ENCODE measurements at regions of chr3 and their contacts with region 1.

Region 1: DNA sequence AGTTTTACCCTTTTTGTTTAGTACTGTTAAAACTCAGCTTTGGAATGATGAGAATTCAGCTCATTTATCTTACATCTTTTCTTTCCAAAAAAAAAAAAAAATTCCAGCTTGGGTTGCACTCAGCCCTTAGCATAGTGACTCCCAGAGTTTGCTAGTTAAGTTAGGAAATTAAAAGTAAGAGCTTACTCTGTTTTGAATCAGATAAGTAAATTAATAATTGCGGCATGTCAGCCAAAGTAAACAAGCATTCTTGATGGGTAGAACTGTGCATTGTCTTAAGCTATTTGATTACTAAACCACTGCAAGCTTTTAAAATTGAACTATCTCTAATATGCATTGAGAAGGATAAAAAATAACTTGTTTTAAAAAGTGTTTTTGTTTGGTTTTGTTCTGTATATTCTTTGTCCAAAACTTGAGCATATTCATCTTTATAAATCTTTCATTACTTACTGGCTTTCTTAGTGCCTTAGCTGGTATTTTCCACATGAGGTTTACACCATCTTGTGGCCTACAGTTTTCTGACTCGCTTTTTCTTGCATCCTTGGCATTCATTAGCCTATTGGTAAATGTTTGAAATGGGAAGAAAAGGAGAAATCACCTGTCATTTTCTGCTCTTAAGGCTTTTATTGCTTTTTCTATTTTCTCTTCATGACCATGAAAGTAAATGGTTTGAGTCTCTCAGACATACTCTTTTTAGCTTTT is 107.6 kb downstream of the FILIP1L start:
- DNase-seq: no peak
- ATAC-seq: peak; percentile 33

Region 2: GRCh38 chr3:99842826-99843589 is 163.7 kb before region 1 on chr3:
- intact Hi-C with region 1: loop called (anchors 5 kb)
- DNase-seq: no peak
- ATAC-seq: peak; percentile 68

Region 3: GRCh38 chr3:99875929-99876841 is 130.5 kb before region 1 on chr3:
- intact Hi-C with region 1: loop called (anchors 2 kb)
- DNase-seq: peak; percentile 92
- ATAC-seq: peak; percentile 97

Region 4: GRCh38 chr3:99938270-99938911 is 68.3 kb before region 1 on chr3:
- intact Hi-C with region 1: loop called (anchors 5 kb)
- DNase-seq: no peak
- ATAC-seq: no peak

Region 5: GRCh38 chr3:99952306-99952705 is 54.4 kb before region 1 on chr3:
- intact Hi-C with region 1: no loop called
- DNase-seq: no peak
- ATAC-seq: no peak

Measured in Right ventricle myocardium inferior (tissue), 1 donor.